CD8-positive, alpha-beta T cell (primary cell): ENCODE measurements at regions of chr10 and their contacts with region 1.

Region 1: GRCh38 chr10:67788025-67788886 is 49.7 kb downstream of the DNAJC12 start:
- DNase-seq: peak; percentile 40 to 77 (median 69)
- ATAC-seq: peak; percentile 76
- H3K4me3 ChIP-seq: no peak overlapping the region
- H3K4me3 Mint-ChIP-seq: no peak overlapping the region
- H3K27ac ChIP-seq: no peak overlapping the region
- H3K27ac Mint-ChIP-seq: no peak overlapping the region
- H3K4me1 ChIP-seq: peaks cover 7% of the 10 kb centered on the region
- H3K4me1 Mint-ChIP-seq: peaks cover 21% of the 10 kb centered on the region
- H3K27me3 ChIP-seq: no peaks in the 10 kb centered on the region
- H3K27me3 Mint-ChIP-seq: peaks cover 3% of the 10 kb centered on the region
- CTCF ChIP-seq: peak; percentile 38

Region 2: DNA sequence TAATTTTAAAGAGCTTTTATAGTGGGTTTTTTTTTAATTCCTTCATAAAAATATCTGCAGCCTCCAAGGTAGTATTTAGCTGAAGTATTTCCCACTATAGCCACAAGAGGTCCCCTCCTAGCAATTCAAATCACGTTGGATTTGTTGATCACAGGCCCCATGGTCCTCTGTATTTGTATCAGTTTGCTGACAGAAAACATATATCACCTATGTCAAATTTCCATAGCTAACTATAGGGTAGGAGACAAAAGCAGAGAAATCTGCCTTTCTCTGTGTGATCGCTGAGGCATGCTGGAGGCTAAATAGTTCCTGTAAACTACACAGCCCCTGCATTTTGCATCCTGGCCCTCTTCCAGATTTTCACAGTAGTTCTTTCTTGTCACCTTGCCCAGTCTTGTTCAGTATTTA is 90.5 kb before region 1 on chr10:
- CTCF ChIA-PET with region 1: interaction called, 300 read pairs
- POLR2A ChIA-PET with region 1: interaction called, 3 read pairs
- intact Hi-C with region 1: no loop called
- DNase-seq: peak in 5 of 9 experiments; percentile 11 to 71 (median 21)
- ATAC-seq: peak; percentile 87
- H3K4me3 ChIP-seq: no peak overlapping the region
- H3K4me3 Mint-ChIP-seq: no peak overlapping the region
- H3K27ac ChIP-seq: no peak overlapping the region
- H3K27ac Mint-ChIP-seq: no peak overlapping the region
- H3K4me1 ChIP-seq: no peaks in the 10 kb centered on the region
- H3K4me1 Mint-ChIP-seq: peaks cover 4% of the 10 kb centered on the region
- H3K27me3 ChIP-seq: no peaks in the 10 kb centered on the region
- H3K27me3 Mint-ChIP-seq: peaks cover 33% of the 10 kb centered on the region
- CTCF ChIP-seq: peak; percentile 72

Region 3: DNA sequence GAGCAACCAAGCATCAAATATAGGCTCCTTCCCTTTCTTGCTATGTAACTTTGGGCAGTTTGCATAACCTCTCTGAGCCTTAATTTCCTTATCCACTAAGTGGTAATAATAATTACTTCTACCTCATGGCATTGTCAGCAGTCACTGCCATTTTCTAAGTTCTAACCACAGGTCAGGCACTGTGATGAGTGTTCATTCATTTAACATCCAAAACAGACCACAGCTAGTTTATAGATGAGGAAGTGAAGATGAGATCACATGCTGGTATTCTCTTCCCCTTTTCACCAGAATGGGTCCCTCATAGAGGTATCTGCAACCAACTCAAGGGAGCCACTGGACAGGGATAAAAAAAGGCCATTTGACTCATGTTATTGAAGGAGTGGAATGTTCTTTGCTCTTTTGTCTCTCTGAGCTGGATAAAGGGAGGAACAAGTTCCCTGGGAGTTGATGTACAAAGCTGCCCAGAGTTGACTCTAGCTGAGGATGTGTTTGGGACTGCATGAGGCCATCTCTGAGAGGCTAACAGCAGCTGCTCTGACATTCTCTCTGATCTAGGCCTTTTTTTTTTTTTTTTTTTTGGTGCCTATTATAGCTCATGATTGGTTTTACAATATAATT is 15.3 kb before region 1 on chr10:
- CTCF ChIA-PET with region 1: interaction called, 49 read pairs
- POLR2A ChIA-PET with region 1: interaction called, 3 read pairs
- intact Hi-C with region 1: no loop called
- DNase-seq: no peak
- ATAC-seq: no peak
- H3K4me3 ChIP-seq: no peak overlapping the region
- H3K4me3 Mint-ChIP-seq: no peak overlapping the region
- H3K27ac ChIP-seq: no peak overlapping the region
- H3K27ac Mint-ChIP-seq: no peak overlapping the region
- H3K4me1 ChIP-seq: no peaks in the 10 kb centered on the region
- H3K4me1 Mint-ChIP-seq: peaks cover 2% of the 10 kb centered on the region
- H3K27me3 ChIP-seq: no peaks in the 10 kb centered on the region
- H3K27me3 Mint-ChIP-seq: no peaks in the 10 kb centered on the region
- CTCF ChIP-seq: no peak

Region 4: GRCh38 chr10:68156373-68157185 is 368.3 kb after region 1 on chr10:
- CTCF ChIA-PET with region 1: interaction called, 39 read pairs
- POLR2A ChIA-PET with region 1: no interaction called
- intact Hi-C with region 1: loop called (anchors 1 kb)
- DNase-seq: peak; percentile 12 to 77 (median 58)
- ATAC-seq: peak; percentile 71
- H3K4me3 ChIP-seq: no peak overlapping the region
- H3K4me3 Mint-ChIP-seq: no peak overlapping the region
- H3K27ac ChIP-seq: no peak overlapping the region
- H3K27ac Mint-ChIP-seq: no peak overlapping the region
- H3K4me1 ChIP-seq: no peaks in the 10 kb centered on the region
- H3K4me1 Mint-ChIP-seq: no peaks in the 10 kb centered on the region
- H3K27me3 ChIP-seq: no peaks in the 10 kb centered on the region
- H3K27me3 Mint-ChIP-seq: peaks cover 5% of the 10 kb centered on the region
- CTCF ChIP-seq: peak; percentile 94

Region 5: GRCh38 chr10:68208424-68209042 is 420.3 kb after region 1 on chr10:
- CTCF ChIA-PET with region 1: no interaction called
- POLR2A ChIA-PET with region 1: no interaction called
- intact Hi-C with region 1: loop called in 1 of 2 experiments (anchors 5 kb)
- DNase-seq: peak in 2 of 9 experiments; percentile 6 to 20
- ATAC-seq: no peak
- H3K4me3 ChIP-seq: no peak overlapping the region
- H3K4me3 Mint-ChIP-seq: no peak overlapping the region
- H3K27ac ChIP-seq: no peak overlapping the region
- H3K27ac Mint-ChIP-seq: no peak overlapping the region
- H3K4me1 ChIP-seq: no peaks in the 10 kb centered on the region
- H3K4me1 Mint-ChIP-seq: no peaks in the 10 kb centered on the region
- H3K27me3 ChIP-seq: no peaks in the 10 kb centered on the region
- H3K27me3 Mint-ChIP-seq: peaks cover 22% of the 10 kb centered on the region
- CTCF ChIP-seq: no peak

Region 6: GRCh38 chr10:68301790-68302502 is 513.7 kb after region 1 on chr10:
- CTCF ChIA-PET with region 1: interaction called, 6 read pairs
- POLR2A ChIA-PET with region 1: no interaction called
- intact Hi-C with region 1: loop called (anchors 2 to 5 kb)
- DNase-seq: peak in 2 of 9 experiments; percentile 37 to 50
- ATAC-seq: peak; percentile 36
- H3K4me3 ChIP-seq: no peak overlapping the region
- H3K4me3 Mint-ChIP-seq: no peak overlapping the region
- H3K27ac ChIP-seq: no peak overlapping the region
- H3K27ac Mint-ChIP-seq: no peak overlapping the region
- H3K4me1 ChIP-seq: no peaks in the 10 kb centered on the region
- H3K4me1 Mint-ChIP-seq: no peaks in the 10 kb centered on the region
- H3K27me3 ChIP-seq: no peaks in the 10 kb centered on the region
- H3K27me3 Mint-ChIP-seq: no peaks in the 10 kb centered on the region
- CTCF ChIP-seq: peak; percentile 56

Region 7: DNA sequence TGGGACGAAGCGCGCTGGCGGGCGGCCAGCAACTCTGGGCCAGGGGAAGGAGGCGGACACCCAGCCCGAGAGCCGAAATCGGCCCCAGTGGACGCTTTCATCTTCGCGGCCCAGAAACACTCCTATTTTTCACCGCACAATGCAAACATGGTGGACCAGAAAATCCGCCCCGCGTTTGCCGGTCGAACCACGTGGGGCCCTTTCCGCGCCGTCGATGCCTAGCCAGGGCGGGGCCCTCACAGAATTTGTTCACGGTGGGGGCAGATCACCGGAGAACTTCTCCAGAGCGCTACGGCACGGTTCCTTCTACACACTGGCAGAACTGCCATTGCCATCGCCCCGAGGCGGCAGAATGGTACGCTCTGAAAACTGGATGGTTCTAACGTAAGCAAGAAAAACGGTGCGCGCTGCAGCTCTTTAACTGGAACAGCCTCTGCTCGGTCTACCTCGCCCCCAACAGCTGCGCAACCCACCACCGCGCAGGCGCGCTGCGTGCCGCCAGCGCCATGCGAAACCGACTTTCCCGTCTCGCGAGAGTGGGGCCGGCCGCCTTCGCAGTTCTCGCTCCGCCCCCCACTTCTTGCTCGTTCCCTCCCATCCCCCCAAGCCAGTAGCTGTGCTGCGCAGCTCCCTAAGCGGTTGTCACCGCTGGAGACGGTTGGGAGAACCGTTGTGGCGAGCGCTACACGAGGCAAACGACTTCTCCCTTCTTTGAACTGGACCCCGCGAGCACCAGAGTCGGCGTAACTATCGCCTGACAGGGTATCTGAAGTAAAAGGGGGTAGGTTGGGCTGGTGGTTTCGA is 543.4 kb after region 1 on chr10 and contains the start of gene HNRNPH3:
- CTCF ChIA-PET with region 1: no interaction called
- POLR2A ChIA-PET with region 1: no interaction called
- intact Hi-C with region 1: no loop called
- DNase-seq: peak; percentile 98 to 100 (median 99)
- ATAC-seq: peak; percentile 82
- H3K4me3 ChIP-seq: peak within 1 kb of the TSS; percentile 75 to 83
- H3K4me3 Mint-ChIP-seq: peak within 1 kb of the TSS; percentile 100
- H3K27ac ChIP-seq: peak within 1 kb of the TSS; percentile 86 to 99
- H3K27ac Mint-ChIP-seq: peak within 1 kb of the TSS; percentile 100
- H3K4me1 ChIP-seq: peaks cover 28% of the 10 kb centered on the region
- H3K4me1 Mint-ChIP-seq: peaks cover 44% of the 10 kb centered on the region
- H3K27me3 ChIP-seq: no peaks in the 10 kb centered on the region
- H3K27me3 Mint-ChIP-seq: no peaks in the 10 kb centered on the region
- CTCF ChIP-seq: no peak
- total RNA-seq, gene HNRNPH3: 242 to 255 TPM